ENCODE measurements at regions of chr4 and their contacts with region 1.

Region 1: GRCh38 chr4:77193511-77194102 is 36.6 kb downstream of the CCNG2 start:
- DNase-seq: peak; percentile 73
- ATAC-seq: peak; percentile 91
- H3K4me3 Mint-ChIP-seq: peak overlapping the region; percentile 85
- H3K27ac Mint-ChIP-seq: peak overlapping the region; percentile 97
- H3K4me1 Mint-ChIP-seq: peaks cover 55% of the 10 kb centered on the region
- H3K27me3 Mint-ChIP-seq: no peaks in the 10 kb centered on the region
- CTCF ChIP-seq: no peak

Region 2: DNA sequence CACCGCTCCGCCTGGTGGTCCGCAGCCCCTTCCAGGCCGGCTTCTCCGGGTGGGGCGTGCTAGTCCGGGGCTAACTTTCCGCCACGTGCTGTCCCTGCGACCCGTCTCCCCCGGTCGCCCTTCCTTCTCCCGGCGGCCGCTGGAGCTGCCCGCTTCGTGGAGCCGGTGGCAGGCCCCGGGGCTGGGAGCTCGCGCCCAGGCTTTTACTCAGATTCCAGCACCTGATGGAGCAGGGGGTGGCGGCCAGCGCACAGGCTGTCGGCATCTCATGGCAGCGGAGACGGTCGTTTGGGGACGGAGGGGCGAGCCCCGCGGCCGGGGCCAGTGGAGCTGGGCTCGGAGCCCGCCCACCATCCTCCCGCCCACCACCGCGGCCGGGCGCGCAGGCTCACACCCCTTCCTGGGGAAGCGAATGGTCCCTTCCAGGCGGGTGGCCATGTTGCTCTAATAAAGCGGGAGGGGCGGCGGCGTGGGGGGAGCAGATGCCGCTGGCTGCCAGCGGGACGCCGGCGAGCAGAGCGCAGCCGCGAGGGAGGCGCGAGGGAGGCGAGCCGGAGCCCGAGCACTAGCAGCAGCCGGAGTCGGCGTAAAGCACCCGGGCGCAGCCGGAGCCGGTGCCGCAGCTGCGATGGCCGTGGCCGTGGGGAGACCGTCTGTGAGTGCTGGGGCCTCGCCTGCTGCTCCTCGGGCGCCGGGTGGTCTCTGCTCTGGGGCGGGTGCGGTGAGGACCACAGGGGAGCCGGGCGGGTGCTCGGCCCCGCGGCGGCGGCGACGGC is 244.1 kb before region 1 on chr4 and contains the start of gene SEPTIN11:
- CTCF ChIA-PET with region 1: no interaction called
- POLR2A ChIA-PET with region 1: interaction called, 7 read pairs
- intact Hi-C with region 1: loop called (anchors 1 kb)
- DNase-seq: peak; percentile 77
- ATAC-seq: peak; percentile 76
- H3K4me3 Mint-ChIP-seq: peak within 1 kb of the TSS; percentile 90
- H3K27ac Mint-ChIP-seq: peak within 1 kb of the TSS; percentile 68
- H3K4me1 Mint-ChIP-seq: peaks cover 15% of the 10 kb centered on the region
- H3K27me3 Mint-ChIP-seq: no peaks in the 10 kb centered on the region
- CTCF ChIP-seq: no peak
- total RNA-seq, gene SEPTIN11: 22.3 and 22.4 TPM in 2 replicates

Region 3: GRCh38 chr4:77120886-77121508 is 72.6 kb before region 1 on chr4:
- CTCF ChIA-PET with region 1: interaction called, 17 read pairs
- POLR2A ChIA-PET with region 1: interaction called, 37 read pairs
- intact Hi-C with region 1: no loop called
- DNase-seq: no peak
- ATAC-seq: peak; percentile 80
- H3K4me3 Mint-ChIP-seq: peak overlapping the region; percentile 5
- H3K27ac Mint-ChIP-seq: no peak overlapping the region
- H3K4me1 Mint-ChIP-seq: peaks cover 58% of the 10 kb centered on the region
- H3K27me3 Mint-ChIP-seq: no peaks in the 10 kb centered on the region
- CTCF ChIP-seq: no peak

Region 4: GRCh38 chr4:77126809-77127208 is 66.8 kb before region 1 on chr4:
- CTCF ChIA-PET with region 1: interaction called, 17 read pairs
- POLR2A ChIA-PET with region 1: interaction called, 37 read pairs
- intact Hi-C with region 1: loop called (anchors 1 kb)
- DNase-seq: no peak
- ATAC-seq: peak; percentile 79
- H3K4me3 Mint-ChIP-seq: peak overlapping the region; percentile 59
- H3K27ac Mint-ChIP-seq: peak overlapping the region; percentile 89
- H3K4me1 Mint-ChIP-seq: peaks cover 74% of the 10 kb centered on the region
- H3K27me3 Mint-ChIP-seq: no peaks in the 10 kb centered on the region
- CTCF ChIP-seq: no peak

Region 5: DNA sequence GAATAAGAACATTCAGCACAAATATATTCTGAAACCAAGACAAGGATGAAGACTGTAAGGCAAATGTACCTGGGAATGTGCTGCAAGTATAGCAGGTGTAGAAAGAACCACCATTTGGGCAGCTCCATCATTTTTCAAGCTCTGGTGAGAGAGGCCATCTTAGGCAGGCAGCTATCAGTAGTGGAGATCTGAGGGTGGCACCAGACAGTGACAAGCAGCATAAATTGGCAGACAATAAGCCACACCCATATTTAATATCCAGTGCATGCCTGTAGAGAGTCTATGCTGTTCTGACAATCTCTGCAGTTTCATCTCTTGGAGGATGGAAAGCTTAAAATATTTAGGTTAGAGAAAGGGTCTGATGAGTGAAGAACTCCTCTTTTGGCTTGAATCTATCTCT is 14.1 kb before region 1 on chr4:
- CTCF ChIA-PET with region 1: interaction called, 3 read pairs
- POLR2A ChIA-PET with region 1: interaction called, 13 read pairs
- intact Hi-C with region 1: no loop called
- DNase-seq: no peak
- ATAC-seq: no peak
- H3K4me3 Mint-ChIP-seq: no peak overlapping the region
- H3K27ac Mint-ChIP-seq: no peak overlapping the region
- H3K4me1 Mint-ChIP-seq: no peaks in the 10 kb centered on the region
- H3K27me3 Mint-ChIP-seq: no peaks in the 10 kb centered on the region
- CTCF ChIP-seq: no peak